ENCODE measurements at regions of chr13 and their contacts with region 1.

Region 1: GRCh38 chr13:27362064-27362883 is 62.1 kb upstream of the GTF3A start:
- DNase-seq: peak; percentile 80
- H3K4me3 Mint-ChIP-seq: peak overlapping the region; percentile 40
- H3K27ac Mint-ChIP-seq: no peak overlapping the region
- H3K4me1 Mint-ChIP-seq: peaks cover 5% of the 10 kb centered on the region
- H3K27me3 Mint-ChIP-seq: peaks cover 14% of the 10 kb centered on the region

Region 2: GRCh38 chr13:26985285-26985878 is 376.9 kb before region 1 on chr13:
- CTCF ChIA-PET with region 1: interaction called, 81 read pairs
- POLR2A ChIA-PET with region 1: no interaction called
- DNase-seq: peak; percentile 82
- H3K4me3 Mint-ChIP-seq: no peak overlapping the region
- H3K27ac Mint-ChIP-seq: no peak overlapping the region
- H3K4me1 Mint-ChIP-seq: peaks cover 12% of the 10 kb centered on the region
- H3K27me3 Mint-ChIP-seq: peaks cover 3% of the 10 kb centered on the region

Region 3: GRCh38 chr13:27374650-27375049 is 12.4 kb after region 1 on chr13:
- CTCF ChIA-PET with region 1: interaction called, 11 read pairs
- POLR2A ChIA-PET with region 1: no interaction called
- DNase-seq: peak; percentile 59
- H3K4me3 Mint-ChIP-seq: no peak overlapping the region
- H3K27ac Mint-ChIP-seq: no peak overlapping the region
- H3K4me1 Mint-ChIP-seq: peaks cover 12% of the 10 kb centered on the region
- H3K27me3 Mint-ChIP-seq: peaks cover 13% of the 10 kb centered on the region

Region 4: DNA sequence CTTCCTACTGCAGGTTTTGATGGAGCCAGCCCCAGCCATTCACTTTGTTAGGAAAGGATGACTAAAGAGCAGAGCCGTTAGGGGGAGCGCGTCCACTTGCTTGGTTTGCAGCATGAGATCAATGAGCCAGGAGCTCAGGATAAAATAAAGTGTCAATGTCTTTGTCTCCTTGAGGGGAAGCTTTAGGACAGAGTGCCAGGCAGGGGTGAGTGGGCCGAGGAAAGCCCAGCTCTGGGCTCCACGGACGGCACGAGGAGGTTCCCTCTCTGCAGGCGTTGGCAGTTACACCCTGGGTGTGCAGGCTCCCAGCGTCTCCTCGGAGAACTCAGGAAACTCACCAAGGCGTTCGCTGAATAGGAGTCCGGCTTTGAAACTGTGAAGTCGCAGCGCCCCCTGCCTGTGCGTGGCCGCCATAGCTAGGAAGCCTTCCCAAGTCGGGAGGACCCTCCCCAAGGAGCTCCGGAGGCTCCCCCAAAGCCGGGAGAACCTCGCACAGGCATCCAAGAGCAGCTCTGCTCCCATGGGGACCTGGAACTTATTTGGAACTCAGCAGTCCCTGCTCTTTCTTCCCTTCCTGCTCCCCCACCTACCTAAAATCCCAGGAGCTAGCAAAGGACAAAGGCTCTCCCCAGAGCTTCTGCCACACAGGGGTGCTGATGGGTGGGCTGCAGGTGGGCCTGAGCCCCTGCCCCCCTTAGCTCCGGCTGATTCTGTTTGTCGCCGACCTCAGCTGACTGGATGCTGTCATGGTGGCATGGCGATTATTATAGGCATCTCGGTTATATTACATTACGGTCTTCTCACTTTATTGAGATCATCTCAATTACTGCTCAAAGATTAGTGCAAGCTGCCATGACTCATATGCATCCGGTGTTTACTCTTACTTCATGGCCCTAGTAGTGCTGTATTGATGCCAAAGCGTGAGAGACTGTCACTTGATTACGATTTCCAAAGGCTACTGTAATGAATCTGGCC is 464.4 kb after region 1 on chr13:
- CTCF ChIA-PET with region 1: interaction called, 32 read pairs
- POLR2A ChIA-PET with region 1: no interaction called
- DNase-seq: peak; percentile 70
- H3K4me3 Mint-ChIP-seq: peak overlapping the region; percentile 4
- H3K27ac Mint-ChIP-seq: no peak overlapping the region
- H3K4me1 Mint-ChIP-seq: peaks cover 5% of the 10 kb centered on the region
- H3K27me3 Mint-ChIP-seq: peaks cover 62% of the 10 kb centered on the region

Region 5: DNA sequence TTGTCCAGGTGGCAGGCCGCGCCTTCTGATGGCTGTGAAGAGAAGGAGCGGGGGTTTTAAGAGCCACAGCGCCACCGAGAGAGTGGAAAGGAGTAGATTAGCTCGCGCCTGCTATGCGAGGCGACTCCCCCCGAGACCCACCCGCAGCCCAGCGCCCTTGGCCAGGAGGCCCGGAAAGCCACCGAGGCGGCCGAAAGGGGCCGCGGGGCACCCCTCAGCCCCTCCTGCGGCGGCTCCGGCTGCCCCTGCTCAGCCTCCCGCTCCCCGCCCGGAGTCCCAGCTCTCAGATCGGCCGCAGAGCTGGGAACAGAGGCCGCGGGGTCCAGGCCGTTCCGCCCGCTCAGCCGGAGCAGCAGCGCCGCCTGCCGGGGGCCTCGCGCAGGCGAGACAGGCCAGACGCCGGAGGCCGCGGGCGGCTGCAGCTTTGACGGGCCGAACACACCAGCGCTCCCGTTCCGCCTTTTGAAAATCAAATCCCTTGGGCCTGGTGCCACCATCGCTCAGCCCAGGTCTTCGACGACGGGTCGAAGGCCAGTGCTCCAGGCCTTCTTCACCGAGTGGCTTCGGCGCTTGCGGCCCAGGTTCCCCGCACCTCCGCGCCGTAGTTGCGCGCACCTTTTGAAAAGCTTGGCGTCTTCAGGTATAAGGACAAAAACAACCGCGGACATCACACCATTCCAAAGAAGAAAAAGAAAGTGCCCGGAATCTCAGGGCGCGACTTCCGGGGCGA is 591.6 kb after region 1 on chr13:
- CTCF ChIA-PET with region 1: interaction called, 10 read pairs
- POLR2A ChIA-PET with region 1: no interaction called
- DNase-seq: peak; percentile 56
- H3K4me3 Mint-ChIP-seq: peak overlapping the region; percentile 62
- H3K27ac Mint-ChIP-seq: peak overlapping the region; percentile 19
- H3K4me1 Mint-ChIP-seq: peaks cover 16% of the 10 kb centered on the region
- H3K27me3 Mint-ChIP-seq: peaks cover 69% of the 10 kb centered on the region

Region 6: DNA sequence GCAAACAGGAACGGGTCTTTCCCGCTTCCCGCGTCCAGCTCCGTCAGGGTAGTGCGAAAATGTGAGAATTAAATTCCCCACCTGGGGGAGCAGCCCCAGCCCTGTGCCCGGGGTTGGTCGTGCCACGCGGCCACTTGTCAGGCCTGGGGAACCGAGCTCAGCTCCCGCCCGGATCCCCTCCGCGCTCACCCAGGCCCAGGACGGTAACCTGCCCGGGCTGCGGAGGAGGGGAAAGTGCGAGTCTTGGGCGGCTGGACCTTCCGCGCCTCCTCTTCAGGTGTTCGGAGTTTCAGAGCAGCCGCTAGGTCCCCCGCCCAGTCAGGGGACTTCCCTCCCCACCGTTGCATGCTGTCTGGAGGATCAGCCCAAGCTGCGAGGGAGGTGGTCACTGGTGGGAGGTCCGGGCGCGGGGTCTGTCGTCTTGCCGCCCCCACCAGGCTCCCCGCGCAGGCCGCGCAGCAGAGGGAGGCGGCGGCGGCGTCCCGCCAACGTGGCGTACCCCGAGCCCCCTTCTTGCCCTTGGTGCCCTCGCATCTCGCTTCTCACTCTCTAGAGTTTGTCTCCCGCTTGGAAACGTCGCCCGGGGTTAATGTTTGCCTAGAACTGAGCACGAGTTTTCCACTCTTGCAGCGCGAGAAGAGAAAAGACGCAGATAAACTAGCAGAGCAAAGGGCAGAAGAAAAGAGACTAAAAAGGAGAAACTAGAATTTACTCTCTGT is 618.2 kb after region 1 on chr13:
- CTCF ChIA-PET with region 1: interaction called, 12 read pairs
- POLR2A ChIA-PET with region 1: no interaction called
- DNase-seq: no peak
- H3K4me3 Mint-ChIP-seq: no peak overlapping the region
- H3K27ac Mint-ChIP-seq: no peak overlapping the region
- H3K4me1 Mint-ChIP-seq: peaks cover 9% of the 10 kb centered on the region
- H3K27me3 Mint-ChIP-seq: peaks cover 68% of the 10 kb centered on the region

Measured in activated CD4-positive, alpha-beta T cell treated with anti-CD3 and anti-CD28 coated beads, Interleukin-2, amount 10 ng/mL, durations not matched to agents 7 days and 5 days (primary cell).